Heart right ventricle (tissue), 16 donors: ENCODE measurements at regions of chr10 and their contacts with region 1.

Region 1: DNA sequence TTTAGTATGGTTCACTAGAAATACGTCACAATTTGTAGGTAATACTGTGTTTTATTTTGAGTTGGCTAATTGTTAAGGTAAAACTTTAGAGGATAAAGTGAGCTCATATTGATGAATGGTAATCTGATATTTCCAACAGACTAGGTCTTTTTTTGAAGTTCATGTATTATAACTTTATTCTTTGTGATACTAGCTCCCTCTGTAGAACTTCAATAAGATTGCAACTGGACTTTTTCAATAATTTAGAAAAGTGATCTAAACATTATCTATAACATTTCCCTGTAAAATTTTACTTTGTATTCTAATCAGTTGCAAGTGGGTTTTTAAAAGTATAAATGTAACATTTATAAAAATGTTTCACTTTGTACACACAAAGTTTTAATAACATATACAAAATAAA is 83.5 kb downstream of the ADK start:
- DNase-seq: no peak
- ATAC-seq: no peak
- H3K4me3 ChIP-seq: no peak overlapping the region
- H3K27ac ChIP-seq: no peak overlapping the region
- H3K4me1 ChIP-seq: no peaks in the 10 kb centered on the region
- H3K27me3 ChIP-seq: no peaks in the 10 kb centered on the region
- CTCF ChIP-seq: peak in 7 of 9 donors; percentile 27 to 58 (median 48)

Region 2: DNA sequence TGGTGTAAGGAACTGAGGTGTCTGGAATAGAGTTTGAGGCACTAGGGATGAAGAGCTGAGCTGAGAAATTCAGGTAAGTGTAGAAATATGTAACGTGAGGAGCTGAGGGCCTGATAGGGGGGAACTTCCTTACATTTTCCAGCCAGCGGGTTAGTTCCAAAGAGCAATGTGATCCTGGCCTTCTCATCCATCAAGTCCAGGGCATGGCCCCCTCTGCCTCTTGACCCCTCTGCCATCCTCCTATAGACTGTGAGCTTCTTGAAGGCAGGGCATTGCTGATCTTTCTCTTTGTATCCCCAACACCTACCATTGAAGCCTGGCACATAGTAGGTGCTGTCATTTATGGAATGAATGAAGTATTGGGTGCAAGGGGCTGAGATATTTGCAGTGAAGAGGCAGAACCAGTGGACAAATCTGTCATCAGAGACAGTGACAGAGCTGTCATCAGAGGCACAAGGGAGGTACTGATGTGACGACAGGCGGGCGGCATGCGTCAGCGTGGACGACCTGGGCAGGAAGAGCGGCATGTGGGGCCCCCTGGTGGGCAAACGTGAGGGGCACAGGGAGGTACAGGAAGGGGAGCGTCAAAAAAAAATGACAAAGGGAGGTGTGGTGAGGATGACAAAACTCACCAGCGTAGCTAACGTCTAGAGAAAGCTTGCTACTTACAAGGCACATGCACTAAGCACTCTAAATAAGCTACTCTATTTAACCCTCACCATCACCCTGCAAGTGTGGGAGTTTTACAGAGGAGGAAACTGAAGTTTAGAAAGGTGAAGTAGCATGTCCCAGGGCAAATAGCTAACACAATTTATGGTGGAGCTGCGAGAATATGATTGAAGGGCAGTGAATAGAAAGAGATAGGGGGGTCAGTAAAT is 355.0 kb before region 1 on chr10:
- intact Hi-C with region 1: loop called in 4 of 10 experiments (anchors 10 kb)
- DNase-seq: peak; percentile 85 to 90
- ATAC-seq: peak; percentile 89 to 96 (median 94)
- H3K4me3 ChIP-seq: no peak overlapping the region
- H3K27ac ChIP-seq: no peak overlapping the region
- H3K4me1 ChIP-seq: peaks cover 0 to 36% (median 20%) of the 10 kb centered on the region in 9 donors
- H3K27me3 ChIP-seq: no peaks in the 10 kb centered on the region
- CTCF ChIP-seq: peak; percentile 83 to 96 (median 93)

Region 3: DNA sequence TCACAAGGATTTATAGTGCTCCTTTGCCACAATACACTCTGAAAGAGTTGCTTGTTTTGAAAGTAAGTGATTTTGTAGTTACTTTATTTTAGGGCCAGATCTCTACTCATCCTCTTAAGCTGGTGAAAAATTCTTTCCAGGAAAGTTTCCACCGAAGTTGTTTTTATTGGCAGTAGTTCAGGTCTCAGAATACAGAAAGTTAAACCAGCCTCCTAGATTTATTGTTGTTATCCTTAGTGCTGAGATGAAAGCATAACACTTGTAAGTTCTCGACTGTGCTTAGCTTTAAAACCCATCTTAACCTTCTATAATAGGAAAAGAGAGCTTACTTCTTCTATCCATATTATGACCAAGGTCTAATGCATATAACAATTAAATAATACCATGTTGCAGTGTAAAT is 89.4 kb before region 1 on chr10:
- intact Hi-C with region 1: loop called in 2 of 10 experiments (anchors 10 kb)
- DNase-seq: peak in 1 of 2 donors; percentile 10
- ATAC-seq: peak in 5 of 8 donors; percentile 25 to 73 (median 47)
- H3K4me3 ChIP-seq: no peak overlapping the region
- H3K27ac ChIP-seq: peak overlapping the region in 1 of 10 donors; percentile 53
- H3K4me1 ChIP-seq: peaks cover 3 to 49% (median 31%) of the 10 kb centered on the region in 9 donors
- H3K27me3 ChIP-seq: no peaks in the 10 kb centered on the region
- CTCF ChIP-seq: no peak

Region 4: DNA sequence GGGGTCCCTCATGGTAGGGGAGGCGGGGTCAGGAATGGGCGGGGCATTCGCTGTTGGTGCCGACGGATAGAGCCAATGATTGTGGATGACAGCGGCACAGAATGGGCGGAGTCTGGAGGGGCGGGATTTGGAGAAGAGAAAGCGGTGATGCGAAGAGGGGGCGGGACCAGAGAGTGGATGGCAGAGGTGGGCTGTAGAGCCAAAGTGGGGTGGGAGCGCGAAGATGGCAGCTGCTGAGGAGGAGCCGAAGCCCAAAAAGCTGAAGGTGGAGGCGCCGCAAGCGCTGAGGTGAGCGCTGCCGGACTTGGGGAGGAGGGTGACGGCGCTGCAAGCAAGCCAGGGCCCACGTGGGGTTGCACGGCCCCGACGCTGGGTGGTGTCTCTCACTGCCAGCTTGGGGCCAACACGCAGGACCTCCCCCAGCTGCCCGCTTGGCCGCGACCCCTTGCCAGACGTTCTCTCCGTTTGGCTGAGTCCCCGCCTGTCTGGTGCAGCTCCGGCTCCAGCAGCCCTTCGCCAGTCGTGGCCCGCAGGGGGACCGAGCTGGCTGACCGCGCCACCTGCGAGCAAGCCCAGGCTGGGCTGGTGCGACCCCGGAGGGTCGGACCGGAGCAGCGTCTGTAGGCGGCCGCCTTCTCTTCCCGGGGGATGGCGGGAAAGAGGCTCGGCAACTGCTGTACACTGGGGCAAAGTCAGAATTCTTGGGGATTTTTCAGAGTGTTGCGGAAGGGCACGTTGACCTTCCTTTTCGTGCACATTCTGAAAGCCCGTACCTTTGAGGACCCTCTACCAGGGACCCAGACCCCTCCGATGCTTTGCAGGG is 83.3 kb before region 1 on chr10 and contains the start of gene ADK:
- intact Hi-C with region 1: loop called in 2 of 10 experiments (anchors 10 kb)
- DNase-seq: peak; percentile 99 to 100
- ATAC-seq: peak; percentile 96 to 99 (median 98)
- H3K4me3 ChIP-seq: peak within 1 kb of the TSS; percentile 56 to 99 (median 76)
- H3K27ac ChIP-seq: peak within 1 kb of the TSS; percentile 62 to 93 (median 90)
- H3K4me1 ChIP-seq: peaks cover 0 to 61% (median 40%) of the 10 kb centered on the region in 9 donors
- H3K27me3 ChIP-seq: no peaks in the 10 kb centered on the region
- CTCF ChIP-seq: peak in 4 of 9 donors; percentile 37 to 62 (median 42)
- total RNA-seq, gene ADK: 25.5 to 50.0 (median 40.1) TPM

Region 5: GRCh38 chr10:74406006-74406405 is 171.4 kb after region 1 on chr10:
- intact Hi-C with region 1: no loop called
- DNase-seq: no peak
- ATAC-seq: no peak
- H3K4me3 ChIP-seq: no peak overlapping the region
- H3K27ac ChIP-seq: no peak overlapping the region
- H3K4me1 ChIP-seq: no peaks in the 10 kb centered on the region
- H3K27me3 ChIP-seq: no peaks in the 10 kb centered on the region
- CTCF ChIP-seq: no peak